ENCODE measurements at regions of chr13 and their contacts with region 1.

Region 1: GRCh38 chr13:51995677-51996551 is 15.3 kb downstream of the ATP7B start:
- DNase-seq: peak; percentile 23 to 29
- ATAC-seq: peak; percentile 52 to 88 (median 62)
- H3K4me3 ChIP-seq: peak overlapping the region in 1 of 10 donors; percentile 9
- H3K27ac ChIP-seq: peak overlapping the region in 7 of 10 donors; percentile 30 to 75 (median 57)
- H3K4me1 ChIP-seq: peaks cover 4 to 38% (median 32%) of the 10 kb centered on the region in 9 donors
- H3K27me3 ChIP-seq: no peaks in the 10 kb centered on the region
- CTCF ChIP-seq: no peak

Region 2: GRCh38 chr13:51814825-51815650 is 180.9 kb before region 1 on chr13:
- intact Hi-C with region 1: loop called in 1 of 10 experiments (anchors 10 kb)
- DNase-seq: peak in 1 of 2 donors; percentile 66
- ATAC-seq: peak; percentile 49 to 73 (median 64)
- H3K4me3 ChIP-seq: peak overlapping the region in 6 of 10 donors; percentile 20 to 30 (median 26)
- H3K27ac ChIP-seq: peak overlapping the region in 2 of 10 donors; percentile 33 to 66
- H3K4me1 ChIP-seq: peaks cover 4 to 38% (median 22%) of the 10 kb centered on the region in 9 donors
- H3K27me3 ChIP-seq: no peaks in the 10 kb centered on the region
- CTCF ChIP-seq: peak; percentile 75 to 90 (median 85)

Region 3: DNA sequence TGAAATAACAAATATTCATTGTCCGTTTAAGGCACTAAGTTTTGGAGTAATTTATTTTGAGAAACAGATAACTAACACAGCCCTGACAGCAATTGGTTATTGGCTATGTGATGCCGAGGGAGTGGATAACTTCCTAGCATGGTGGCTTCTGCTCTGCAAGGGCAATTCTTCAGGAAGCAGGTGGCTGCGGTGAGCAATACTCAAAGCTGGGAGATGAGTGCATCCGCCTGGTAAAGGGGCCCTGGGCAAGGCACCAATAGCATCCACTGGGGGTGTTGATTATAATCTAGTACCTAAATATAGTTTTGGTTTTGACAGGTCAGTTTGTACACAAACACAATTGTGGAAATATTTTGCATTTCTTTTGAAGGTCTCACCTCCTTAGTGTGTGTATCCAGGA is 93.1 kb before region 1 on chr13:
- intact Hi-C with region 1: loop called in 2 of 10 experiments (anchors 5 kb)
- DNase-seq: no peak
- ATAC-seq: no peak
- H3K4me3 ChIP-seq: no peak overlapping the region
- H3K27ac ChIP-seq: no peak overlapping the region
- H3K4me1 ChIP-seq: peaks cover 0 to 13% (median 0%) of the 10 kb centered on the region in 9 donors
- H3K27me3 ChIP-seq: no peaks in the 10 kb centered on the region
- CTCF ChIP-seq: no peak

Region 4: GRCh38 chr13:51911860-51912510 is 83.9 kb before region 1 on chr13:
- intact Hi-C with region 1: loop called in 1 of 10 experiments (anchors 10 kb)
- DNase-seq: no peak
- ATAC-seq: peak in 7 of 8 donors; percentile 43 to 84 (median 68)
- H3K4me3 ChIP-seq: no peak overlapping the region
- H3K27ac ChIP-seq: no peak overlapping the region
- H3K4me1 ChIP-seq: peaks cover 0 to 7% (median 0%) of the 10 kb centered on the region in 9 donors
- H3K27me3 ChIP-seq: no peaks in the 10 kb centered on the region
- CTCF ChIP-seq: peak in 2 of 9 donors; percentile 23 to 31

Region 5: GRCh38 chr13:51928231-51928630 is 67.7 kb before region 1 on chr13:
- intact Hi-C with region 1: no loop called
- DNase-seq: peak in 1 of 2 donors; percentile 31
- ATAC-seq: peak; percentile 67 to 95 (median 87)
- H3K4me3 ChIP-seq: no peak overlapping the region
- H3K27ac ChIP-seq: peak overlapping the region in 3 of 10 donors; percentile 36 to 69 (median 62)
- H3K4me1 ChIP-seq: peaks cover 0 to 14% (median 4%) of the 10 kb centered on the region in 9 donors
- H3K27me3 ChIP-seq: no peaks in the 10 kb centered on the region
- CTCF ChIP-seq: no peak

Region 6: DNA sequence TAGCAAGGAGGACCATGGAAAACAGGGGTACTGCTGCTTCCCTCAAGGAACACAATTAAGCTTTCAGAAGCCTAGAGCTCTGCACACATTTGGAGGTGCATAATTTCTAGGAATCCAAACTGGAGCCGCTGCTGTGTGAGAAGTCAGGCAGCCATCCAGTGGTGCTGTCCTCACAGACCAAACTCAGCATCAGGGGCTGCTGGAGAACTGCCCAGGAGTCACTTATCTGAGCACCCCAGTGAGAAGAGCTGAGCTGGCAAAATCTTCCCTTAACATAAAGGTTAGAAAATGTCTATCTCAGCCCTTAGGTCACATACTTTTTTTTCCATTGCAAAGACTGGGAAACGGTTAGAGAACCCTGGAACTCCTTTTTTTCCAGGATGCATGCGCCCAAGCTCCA is 57.5 kb before region 1 on chr13:
- intact Hi-C with region 1: no loop called
- DNase-seq: no peak
- ATAC-seq: no peak
- H3K4me3 ChIP-seq: no peak overlapping the region
- H3K27ac ChIP-seq: no peak overlapping the region
- H3K4me1 ChIP-seq: no peaks in the 10 kb centered on the region
- H3K27me3 ChIP-seq: no peaks in the 10 kb centered on the region
- CTCF ChIP-seq: no peak

Region 7: GRCh38 chr13:51959773-51960172 is 36.1 kb before region 1 on chr13:
- intact Hi-C with region 1: no loop called
- DNase-seq: no peak
- ATAC-seq: no peak
- H3K4me3 ChIP-seq: no peak overlapping the region
- H3K27ac ChIP-seq: no peak overlapping the region
- H3K4me1 ChIP-seq: peaks cover 0 to 4% (median 0%) of the 10 kb centered on the region in 9 donors
- H3K27me3 ChIP-seq: no peaks in the 10 kb centered on the region
- CTCF ChIP-seq: no peak

Region 8: GRCh38 chr13:52034616-52035226 is 38.8 kb after region 1 on chr13:
- intact Hi-C with region 1: no loop called
- DNase-seq: no peak
- ATAC-seq: no peak
- H3K4me3 ChIP-seq: no peak overlapping the region
- H3K27ac ChIP-seq: no peak overlapping the region
- H3K4me1 ChIP-seq: no peaks in the 10 kb centered on the region
- H3K27me3 ChIP-seq: no peaks in the 10 kb centered on the region
- CTCF ChIP-seq: no peak

Region 9: GRCh38 chr13:52665325-52665724 is 669.4 kb after region 1 on chr13:
- intact Hi-C with region 1: loop called in 1 of 10 experiments (anchors 5 kb)
- DNase-seq: no peak
- ATAC-seq: no peak
- H3K4me3 ChIP-seq: no peak overlapping the region
- H3K27ac ChIP-seq: no peak overlapping the region
- H3K4me1 ChIP-seq: peaks cover 0 to 3% (median 0%) of the 10 kb centered on the region in 9 donors
- H3K27me3 ChIP-seq: no peaks in the 10 kb centered on the region
- CTCF ChIP-seq: peak in 8 of 9 donors; percentile 10 to 61 (median 47)